Activated CD8-positive, alpha-beta T cell treated with anti-CD3 and anti-CD28 coated beads for 36 hours (primary cell): ENCODE measurements at regions of chr17 and their contacts with region 1.

Region 1: DNA sequence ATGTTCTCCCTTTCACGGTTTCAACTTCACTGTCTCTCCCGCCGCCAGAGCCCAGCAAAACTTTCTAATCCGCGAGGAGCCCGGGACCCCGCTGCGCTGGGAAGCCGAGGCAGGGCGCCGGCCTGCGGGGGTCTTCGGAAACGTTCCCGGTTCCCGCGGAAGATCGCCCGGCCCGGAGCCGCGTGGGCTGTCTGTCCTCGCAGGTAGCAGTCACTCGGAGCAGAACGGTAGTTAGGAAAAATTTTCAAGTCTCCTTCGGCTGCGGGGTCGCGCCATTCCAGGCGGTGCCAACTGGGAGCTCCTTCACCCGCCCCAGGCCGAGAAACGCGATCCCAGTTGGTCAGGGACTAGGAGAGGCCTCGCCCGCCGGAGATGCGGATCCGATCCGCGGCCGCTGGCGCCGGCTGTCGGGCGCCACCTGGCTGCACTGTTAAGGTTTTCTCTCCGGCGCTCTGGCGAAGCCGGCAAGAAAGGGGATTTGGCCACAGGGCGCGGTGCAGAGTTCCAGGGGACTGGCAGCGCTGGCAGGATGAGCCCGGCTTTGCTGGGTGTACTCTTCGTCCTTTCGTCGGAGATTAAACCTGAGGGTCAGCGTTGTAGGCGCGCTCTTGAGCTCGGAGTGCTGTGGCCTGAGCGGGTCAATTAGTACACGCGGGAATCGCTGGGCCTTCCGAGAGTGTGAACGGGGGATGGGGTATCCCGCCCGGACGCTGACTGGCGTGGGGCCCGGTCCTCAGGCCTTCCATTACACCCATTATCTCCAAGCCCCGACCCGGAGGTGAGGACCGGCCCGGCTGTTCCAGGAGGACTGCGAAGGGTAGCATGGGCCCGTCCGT is 135.4 kb downstream of the KCNJ12 start:
- DNase-seq: peak; percentile 71
- ATAC-seq: peak; percentile 78
- H3K4me3 Mint-ChIP-seq: peak overlapping the region; percentile 66
- H3K27ac Mint-ChIP-seq: no peak overlapping the region
- H3K4me1 Mint-ChIP-seq: peaks cover 9% of the 10 kb centered on the region
- H3K27me3 Mint-ChIP-seq: peaks cover 29% of the 10 kb centered on the region
- CTCF ChIP-seq: peak; percentile 75

Region 2: DNA sequence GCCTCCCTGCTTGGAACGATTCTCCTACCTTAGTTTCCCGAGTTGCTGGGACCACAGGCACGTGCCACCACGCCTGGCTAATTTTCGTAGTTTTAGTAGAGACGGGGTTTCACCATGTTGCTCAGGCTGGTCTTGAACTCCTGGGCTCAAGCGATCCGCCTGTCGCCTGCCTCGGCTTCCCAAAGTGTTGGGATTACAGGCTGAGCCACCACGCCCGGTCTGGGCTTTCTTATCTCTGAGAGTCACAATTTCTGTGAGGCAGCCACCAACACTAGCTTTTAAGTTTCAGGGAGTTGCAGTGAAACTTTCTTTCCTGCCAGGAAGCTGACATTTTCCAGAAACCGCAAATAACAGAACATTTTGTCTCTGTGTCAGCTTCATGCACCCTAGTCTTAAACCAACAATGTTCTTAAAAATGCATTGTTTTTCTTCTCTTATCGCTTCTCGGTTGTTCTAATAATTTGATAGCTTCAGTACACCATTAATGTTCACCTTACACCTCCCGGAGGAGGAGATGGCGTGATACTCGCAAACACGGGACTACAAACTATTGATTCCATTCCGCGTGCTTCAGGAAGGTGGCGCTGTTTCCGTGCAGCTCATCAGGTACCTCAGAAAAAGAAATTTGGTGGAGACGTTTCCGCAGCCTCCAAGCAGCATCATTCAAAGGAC is 392.2 kb before region 1 on chr17:
- CTCF ChIA-PET with region 1: interaction called, 16 read pairs
- POLR2A ChIA-PET with region 1: no interaction called
- intact Hi-C with region 1: loop called (anchors 10 kb)
- DNase-seq: peak; percentile 79
- ATAC-seq: peak; percentile 88
- H3K4me3 Mint-ChIP-seq: no peak overlapping the region
- H3K27ac Mint-ChIP-seq: no peak overlapping the region
- H3K4me1 Mint-ChIP-seq: peaks cover 7% of the 10 kb centered on the region
- H3K27me3 Mint-ChIP-seq: peaks cover 1% of the 10 kb centered on the region
- CTCF ChIP-seq: peak; percentile 83

Region 3: DNA sequence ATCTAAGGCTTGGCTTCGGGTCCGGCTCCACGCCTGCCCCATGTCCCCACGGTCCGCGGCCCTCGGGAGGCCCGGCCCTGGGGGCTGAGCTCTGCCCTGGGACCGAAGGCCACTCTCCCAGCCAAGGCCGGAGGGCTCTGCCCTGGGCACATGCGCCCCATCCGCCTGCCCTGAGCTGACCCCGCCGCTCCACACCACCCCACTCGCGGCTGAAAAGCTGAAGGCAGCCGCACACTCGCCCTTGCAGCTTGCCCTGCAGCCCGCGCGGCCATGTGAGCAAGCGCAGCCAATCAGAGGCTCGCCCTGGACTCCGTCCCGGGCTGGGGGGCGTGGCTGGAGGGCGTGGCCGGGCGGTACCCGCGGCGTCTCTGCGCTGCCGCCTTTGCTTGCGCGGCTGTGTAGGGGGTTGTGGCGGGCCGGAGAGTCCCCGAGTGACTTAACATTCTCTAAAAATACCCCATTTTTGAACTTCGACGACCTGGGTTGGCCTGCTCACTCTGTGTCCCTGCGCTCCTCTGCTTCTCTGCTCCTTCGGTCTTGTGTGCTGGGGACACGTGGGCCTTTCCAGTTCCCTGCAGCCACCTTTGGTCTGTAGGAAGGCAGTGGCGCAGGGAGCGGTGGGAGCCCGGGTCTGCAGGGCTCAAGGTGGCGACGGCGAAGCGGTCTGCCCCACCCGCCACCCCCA is 235.9 kb before region 1 on chr17:
- CTCF ChIA-PET with region 1: interaction called, 27 read pairs
- POLR2A ChIA-PET with region 1: no interaction called
- intact Hi-C with region 1: loop called (anchors 5 kb)
- DNase-seq: peak; percentile 96
- ATAC-seq: peak; percentile 85
- H3K4me3 Mint-ChIP-seq: peak overlapping the region; percentile 82
- H3K27ac Mint-ChIP-seq: peak overlapping the region; percentile 87
- H3K4me1 Mint-ChIP-seq: peaks cover 38% of the 10 kb centered on the region
- H3K27me3 Mint-ChIP-seq: no peaks in the 10 kb centered on the region
- CTCF ChIP-seq: peak; percentile 6

Region 4: GRCh38 chr17:21318439-21318838 is 193.1 kb before region 1 on chr17:
- CTCF ChIA-PET with region 1: no interaction called
- POLR2A ChIA-PET with region 1: no interaction called
- intact Hi-C with region 1: loop called (anchors 10 kb)
- DNase-seq: no peak
- ATAC-seq: no peak
- H3K4me3 Mint-ChIP-seq: no peak overlapping the region
- H3K27ac Mint-ChIP-seq: no peak overlapping the region
- H3K4me1 Mint-ChIP-seq: peaks cover 4% of the 10 kb centered on the region
- H3K27me3 Mint-ChIP-seq: no peaks in the 10 kb centered on the region
- CTCF ChIP-seq: no peak

Region 5: GRCh38 chr17:21500064-21500463 is 11.5 kb before region 1 on chr17:
- CTCF ChIA-PET with region 1: interaction called, 18 read pairs
- POLR2A ChIA-PET with region 1: no interaction called
- intact Hi-C with region 1: no loop called
- DNase-seq: no peak
- ATAC-seq: no peak
- H3K4me3 Mint-ChIP-seq: no peak overlapping the region
- H3K27ac Mint-ChIP-seq: no peak overlapping the region
- H3K4me1 Mint-ChIP-seq: no peaks in the 10 kb centered on the region
- H3K27me3 Mint-ChIP-seq: no peaks in the 10 kb centered on the region
- CTCF ChIP-seq: no peak

Region 6: DNA sequence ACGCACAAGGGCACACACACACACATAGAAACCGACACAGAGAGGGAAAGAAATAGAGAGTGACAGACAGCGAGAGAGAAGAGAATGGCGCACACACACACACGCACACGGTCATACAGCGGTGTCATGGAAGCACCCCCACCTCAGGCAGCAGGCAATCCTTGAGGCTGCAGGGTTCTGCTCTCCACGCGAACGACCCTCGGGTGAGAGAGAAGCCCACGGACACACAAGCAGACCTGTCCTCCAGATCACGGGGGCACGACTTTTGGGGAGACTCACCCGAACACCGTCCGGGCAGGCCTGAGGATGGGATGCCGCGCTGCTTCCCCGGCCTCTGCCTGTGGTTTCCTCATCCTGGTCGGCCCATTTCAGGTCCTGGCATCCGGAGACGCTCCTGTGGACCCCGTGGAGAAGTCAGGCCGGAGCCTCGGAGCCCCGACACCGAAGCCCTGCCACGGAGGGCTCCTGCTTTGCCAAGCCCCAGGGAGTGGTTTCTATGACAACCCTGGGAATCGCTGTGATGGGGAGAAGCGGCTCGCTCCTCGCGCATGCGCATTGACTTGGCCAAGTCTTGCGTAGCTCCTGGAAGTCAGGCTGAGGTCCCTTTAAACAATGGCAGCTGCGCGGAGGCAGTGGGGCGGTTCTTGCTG is 62.5 kb after region 1 on chr17:
- CTCF ChIA-PET with region 1: no interaction called
- POLR2A ChIA-PET with region 1: no interaction called
- intact Hi-C with region 1: no loop called
- DNase-seq: peak; percentile 20
- ATAC-seq: no peak
- H3K4me3 Mint-ChIP-seq: peak overlapping the region; percentile 28
- H3K27ac Mint-ChIP-seq: no peak overlapping the region
- H3K4me1 Mint-ChIP-seq: no peaks in the 10 kb centered on the region
- H3K27me3 Mint-ChIP-seq: peaks cover 8% of the 10 kb centered on the region
- CTCF ChIP-seq: no peak